ENCODE measurements at regions of chr1 and their contacts with region 1.

Region 1: GRCh38 chr1:246497331-246497915 is 9.7 kb downstream of the SMYD3 start:
- DNase-seq: no peak
- H3K4me3 Mint-ChIP-seq: no peak overlapping the region
- H3K27ac Mint-ChIP-seq: no peak overlapping the region
- H3K4me1 Mint-ChIP-seq: peaks cover 11% of the 10 kb centered on the region
- H3K27me3 Mint-ChIP-seq: no peaks in the 10 kb centered on the region

Region 2: DNA sequence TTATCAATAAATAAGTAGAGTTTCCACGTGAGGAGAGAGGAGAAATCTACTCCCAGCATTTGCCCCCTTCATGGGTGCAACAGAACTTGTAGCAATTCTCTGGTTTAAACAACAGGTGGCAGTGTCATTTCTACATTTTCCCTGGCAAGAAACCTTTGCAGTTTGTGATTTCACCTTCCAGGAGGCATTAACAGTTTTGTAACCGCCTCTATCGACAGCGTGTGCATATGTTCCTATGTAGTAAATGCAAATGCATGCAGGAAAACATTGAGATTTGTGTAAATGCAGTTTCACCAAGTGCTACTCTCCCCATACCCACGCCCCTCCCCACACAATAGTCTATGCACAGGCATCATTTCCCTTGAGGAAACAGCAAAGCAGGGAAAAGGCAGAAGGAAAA is 485.1 kb before region 1 on chr1:
- intact Hi-C with region 1: loop called (anchors 1 kb)
- DNase-seq: no peak
- H3K4me3 Mint-ChIP-seq: no peak overlapping the region
- H3K27ac Mint-ChIP-seq: no peak overlapping the region
- H3K4me1 Mint-ChIP-seq: no peaks in the 10 kb centered on the region
- H3K27me3 Mint-ChIP-seq: no peaks in the 10 kb centered on the region

Region 3: GRCh38 chr1:246383239-246383589 is 114.2 kb before region 1 on chr1:
- intact Hi-C with region 1: no loop called
- DNase-seq: no peak
- H3K4me3 Mint-ChIP-seq: no peak overlapping the region
- H3K27ac Mint-ChIP-seq: no peak overlapping the region
- H3K4me1 Mint-ChIP-seq: peaks cover 4% of the 10 kb centered on the region
- H3K27me3 Mint-ChIP-seq: no peaks in the 10 kb centered on the region

Region 4: GRCh38 chr1:246681900-246682299 is 184.5 kb after region 1 on chr1:
- intact Hi-C with region 1: no loop called
- DNase-seq: no peak
- H3K4me3 Mint-ChIP-seq: no peak overlapping the region
- H3K27ac Mint-ChIP-seq: no peak overlapping the region
- H3K4me1 Mint-ChIP-seq: no peaks in the 10 kb centered on the region
- H3K27me3 Mint-ChIP-seq: no peaks in the 10 kb centered on the region

Region 5: GRCh38 chr1:246699095-246699735 is 201.8 kb after region 1 on chr1:
- intact Hi-C with region 1: loop called (anchors 1 kb)
- DNase-seq: peak; percentile 71
- H3K4me3 Mint-ChIP-seq: no peak overlapping the region
- H3K27ac Mint-ChIP-seq: no peak overlapping the region
- H3K4me1 Mint-ChIP-seq: peaks cover 9% of the 10 kb centered on the region
- H3K27me3 Mint-ChIP-seq: peaks cover 5% of the 10 kb centered on the region

Region 6: GRCh38 chr1:246753670-246754535 is 256.5 kb after region 1 on chr1:
- intact Hi-C with region 1: loop called (anchors 1 kb)
- DNase-seq: peak; percentile 32
- H3K4me3 Mint-ChIP-seq: no peak overlapping the region
- H3K27ac Mint-ChIP-seq: no peak overlapping the region
- H3K4me1 Mint-ChIP-seq: no peaks in the 10 kb centered on the region
- H3K27me3 Mint-ChIP-seq: no peaks in the 10 kb centered on the region